CD4-positive, alpha-beta memory T cell (primary cell): ENCODE measurements at regions of chr20 and their contacts with region 1.

Region 1: GRCh38 chr20:33791959-33792597 is 19.1 kb upstream of the CHMP4B start:
- DNase-seq: peak; percentile 20 to 48 (median 32)
- H3K4me3 ChIP-seq: no peak overlapping the region
- H3K4me3 Mint-ChIP-seq: no peak overlapping the region
- H3K27ac ChIP-seq: no peak overlapping the region
- H3K27ac Mint-ChIP-seq: no peak overlapping the region
- H3K4me1 ChIP-seq: peaks cover 9% of the 10 kb centered on the region
- H3K4me1 Mint-ChIP-seq: peaks cover 6 to 14% (median 10%) of the 10 kb centered on the region in 4 donors
- H3K27me3 ChIP-seq: no peaks in the 10 kb centered on the region
- H3K27me3 Mint-ChIP-seq: no peaks in the 10 kb centered on the region

Region 2: GRCh38 chr20:34129518-34130162 is 337.6 kb after region 1 on chr20:
- CTCF ChIA-PET with region 1: interaction called, 11 read pairs
- POLR2A ChIA-PET with region 1: no interaction called
- intact Hi-C with region 1: loop called (anchors 1 kb)
- DNase-seq: peak; percentile 65 to 74 (median 71)
- H3K4me3 ChIP-seq: no peak overlapping the region
- H3K4me3 Mint-ChIP-seq: peak overlapping the region in 6 of 8 donors; percentile 3 to 77 (median 36)
- H3K27ac ChIP-seq: no peak overlapping the region
- H3K27ac Mint-ChIP-seq: no peak overlapping the region
- H3K4me1 ChIP-seq: peaks cover 4% of the 10 kb centered on the region
- H3K4me1 Mint-ChIP-seq: peaks cover 4 to 6% (median 4%) of the 10 kb centered on the region in 4 donors
- H3K27me3 ChIP-seq: no peaks in the 10 kb centered on the region
- H3K27me3 Mint-ChIP-seq: peaks cover 4 to 6% of the 10 kb centered on the region in 2 donors